ENCODE measurements at regions of chr6 and their contacts with region 1.

Region 1: GRCh38 chr6:119349323-119350042 is at the start of gene MAN1A1:
- DNase-seq: peak; percentile 97
- CTCF ChIP-seq: no peak

Region 2: GRCh38 chr6:118952683-118953082 is 396.8 kb before region 1 on chr6:
- in situ Hi-C with region 1: no loop called
- DNase-seq: no peak
- CTCF ChIP-seq: no peak

Region 3: DNA sequence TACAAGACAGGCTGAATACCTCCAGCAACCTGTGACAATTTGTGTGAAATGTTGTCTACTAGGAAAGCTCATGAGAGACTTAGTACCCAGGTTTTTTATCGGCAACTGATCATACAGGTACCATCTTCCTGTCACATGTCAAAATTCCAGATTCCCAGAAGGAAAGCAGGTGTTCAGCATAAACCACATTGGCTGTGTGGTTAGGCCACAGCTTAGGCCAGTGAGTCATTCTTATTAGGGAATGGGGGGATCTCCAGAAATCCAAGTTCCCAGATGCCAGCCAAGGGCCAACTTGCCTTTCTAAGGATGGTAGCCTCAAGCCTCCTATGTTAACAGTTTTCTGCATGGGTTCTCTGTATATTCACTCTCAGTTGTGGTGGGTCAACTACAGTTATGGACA is 337.0 kb before region 1 on chr6:
- in situ Hi-C with region 1: no loop called
- DNase-seq: no peak
- CTCF ChIP-seq: no peak

Region 4: DNA sequence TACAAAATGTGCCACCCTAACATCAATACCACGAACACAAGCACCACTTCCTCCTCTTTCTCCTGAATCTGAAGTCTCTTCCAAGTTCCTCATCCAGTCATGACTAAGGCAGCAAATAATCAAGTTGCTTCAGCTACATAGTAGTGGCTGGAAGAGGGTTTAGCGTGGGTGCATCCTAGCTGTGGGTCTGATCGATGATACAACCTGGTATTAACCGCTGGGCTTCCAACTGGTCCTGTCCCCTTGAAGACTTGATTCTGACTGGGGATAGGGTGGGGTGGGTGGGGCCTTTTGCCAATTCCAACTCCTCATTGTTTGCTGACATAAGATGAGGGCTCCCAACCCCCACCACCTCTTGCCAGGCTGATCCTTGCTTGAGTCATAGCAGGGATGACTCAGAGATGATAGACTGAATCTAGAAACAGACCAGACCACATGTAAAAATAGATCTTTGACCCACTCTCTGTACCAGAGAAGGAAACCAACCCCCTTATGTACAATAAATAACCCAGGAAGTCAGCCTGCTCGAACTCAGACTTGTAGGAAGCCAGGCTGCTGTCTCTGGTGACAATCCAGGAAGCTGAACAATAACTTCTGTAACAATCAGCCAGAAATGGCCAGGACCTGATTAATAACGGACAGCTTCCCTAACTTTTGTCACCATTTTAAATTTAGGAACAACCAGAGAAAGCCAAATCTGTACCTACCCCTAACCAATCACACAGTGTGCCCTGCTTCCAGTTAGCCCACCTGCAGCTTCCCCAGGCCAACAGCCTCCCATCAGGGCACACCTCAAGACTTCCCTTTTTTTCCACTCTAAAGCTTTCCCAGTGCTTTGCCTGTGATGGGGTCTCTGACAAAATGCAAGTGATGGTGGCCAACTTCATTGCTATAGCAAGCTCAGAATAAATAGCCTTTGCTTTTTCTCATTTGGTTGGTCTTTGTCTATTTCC is 202.1 kb before region 1 on chr6:
- in situ Hi-C with region 1: loop called (anchors 10 kb)
- DNase-seq: peak; percentile 67
- CTCF ChIP-seq: no peak

Region 5: DNA sequence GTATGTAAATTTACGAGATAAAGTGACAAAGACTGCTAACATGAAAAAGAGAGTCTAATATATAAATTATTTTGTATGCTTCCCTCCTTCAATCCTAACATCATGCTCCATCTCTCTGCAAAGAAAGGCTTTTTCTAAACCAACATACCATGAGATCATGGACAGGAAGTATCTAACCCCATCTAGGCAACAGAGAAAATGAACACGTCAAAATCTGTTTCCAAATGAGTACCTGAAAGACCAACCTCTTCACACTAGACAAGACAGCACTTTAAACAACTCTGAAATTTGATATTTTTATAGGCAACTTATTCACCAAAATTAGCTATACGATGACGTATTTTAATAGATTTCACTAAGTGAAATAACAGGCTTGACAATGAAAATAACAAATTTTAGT is 54.5 kb before region 1 on chr6:
- in situ Hi-C with region 1: no loop called
- DNase-seq: no peak
- CTCF ChIP-seq: no peak

Region 6: DNA sequence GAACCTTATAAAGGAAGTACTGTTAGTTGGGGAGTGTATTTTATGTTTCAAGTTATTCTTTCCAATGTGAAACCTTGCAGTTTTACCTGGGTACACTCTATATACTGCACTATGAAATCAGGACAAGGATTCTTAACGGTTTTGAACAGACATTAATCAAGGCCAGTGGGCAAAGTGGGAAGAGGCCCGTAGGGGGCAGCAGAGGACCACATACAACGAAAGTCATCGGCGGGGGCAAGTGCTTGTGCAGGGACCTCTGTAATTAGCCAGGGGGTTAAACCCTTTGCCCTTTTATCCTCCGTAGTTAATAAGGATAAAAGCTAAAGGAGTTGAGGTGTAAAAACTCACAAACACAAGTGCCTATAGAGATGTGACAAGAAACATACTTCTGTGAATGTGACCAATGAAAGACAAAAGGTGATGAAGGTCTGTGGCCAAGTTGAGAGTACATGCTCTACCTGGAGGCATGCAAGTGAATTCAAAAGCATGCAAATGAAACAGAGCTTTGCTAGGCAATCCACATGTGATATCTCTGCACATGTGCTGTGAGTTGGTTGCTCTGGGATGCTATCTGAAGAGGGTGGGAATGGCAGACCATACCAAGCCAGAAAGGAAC is 392.8 kb after region 1 on chr6:
- in situ Hi-C with region 1: loop called (anchors 25 kb)
- DNase-seq: peak; percentile 15
- CTCF ChIP-seq: peak; percentile 87